ENCODE measurements at regions of chr20 and their contacts with region 1.

Region 1: GRCh38 chr20:31849455-31849925 is 4.1 kb upstream of the FOXS1 start:
- DNase-seq: no peak
- CTCF ChIP-seq: no peak

Region 2: DNA sequence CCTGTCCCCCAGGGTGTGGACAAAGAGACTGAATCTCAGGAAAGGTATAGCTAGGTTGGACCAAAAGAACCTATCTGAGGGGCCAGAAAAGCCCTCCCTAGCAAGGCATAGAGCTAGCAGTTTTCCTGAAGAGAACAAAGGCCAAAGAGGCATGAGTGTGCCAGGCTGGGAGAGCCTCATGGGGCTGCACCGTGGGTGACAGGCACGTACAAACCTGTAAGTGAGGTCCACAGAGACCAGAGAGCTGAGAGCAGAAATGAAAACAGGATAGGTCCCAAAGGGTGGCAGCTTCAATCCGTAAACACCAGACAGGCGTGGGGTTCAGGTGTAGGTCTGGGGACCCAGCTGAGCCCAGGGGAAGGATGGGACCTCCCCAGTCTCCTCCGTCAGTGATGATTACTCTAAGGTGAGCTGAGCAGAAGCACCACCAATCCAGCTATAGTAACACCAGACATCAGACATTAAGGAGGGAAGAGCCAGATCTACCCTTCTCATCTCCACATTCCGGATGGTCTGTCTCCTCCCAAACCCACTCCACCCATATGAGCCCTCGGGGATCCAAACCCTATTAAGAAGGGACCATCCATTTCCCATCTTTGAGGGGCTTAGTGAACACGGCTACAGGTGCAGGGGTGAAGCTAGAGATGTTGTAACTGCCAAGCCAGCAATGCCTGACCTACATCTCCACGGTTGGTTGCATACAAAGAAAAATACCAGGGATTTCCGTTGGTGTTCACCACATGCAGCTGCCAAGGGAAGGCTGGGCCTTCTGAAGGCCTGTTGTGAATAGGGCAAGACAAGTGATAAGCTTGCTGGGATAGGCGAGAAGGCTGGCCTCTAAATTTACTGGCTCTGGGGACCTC is 165.1 kb before region 1 on chr20:
- CTCF ChIA-PET with region 1: no interaction called
- POLR2A ChIA-PET with region 1: no interaction called
- DNase-seq: no peak
- CTCF ChIP-seq: no peak

Region 3: GRCh38 chr20:31822421-31823330 is 26.8 kb before region 1 on chr20:
- CTCF ChIA-PET with region 1: interaction called, 87 read pairs
- POLR2A ChIA-PET with region 1: no interaction called
- DNase-seq: peak; percentile 92
- CTCF ChIP-seq: peak; percentile 96

Region 4: GRCh38 chr20:31861346-31862156 is 12.1 kb after region 1 on chr20:
- CTCF ChIA-PET with region 1: interaction called, 54 read pairs
- POLR2A ChIA-PET with region 1: no interaction called
- DNase-seq: peak; percentile 92
- CTCF ChIP-seq: no peak

Region 5: DNA sequence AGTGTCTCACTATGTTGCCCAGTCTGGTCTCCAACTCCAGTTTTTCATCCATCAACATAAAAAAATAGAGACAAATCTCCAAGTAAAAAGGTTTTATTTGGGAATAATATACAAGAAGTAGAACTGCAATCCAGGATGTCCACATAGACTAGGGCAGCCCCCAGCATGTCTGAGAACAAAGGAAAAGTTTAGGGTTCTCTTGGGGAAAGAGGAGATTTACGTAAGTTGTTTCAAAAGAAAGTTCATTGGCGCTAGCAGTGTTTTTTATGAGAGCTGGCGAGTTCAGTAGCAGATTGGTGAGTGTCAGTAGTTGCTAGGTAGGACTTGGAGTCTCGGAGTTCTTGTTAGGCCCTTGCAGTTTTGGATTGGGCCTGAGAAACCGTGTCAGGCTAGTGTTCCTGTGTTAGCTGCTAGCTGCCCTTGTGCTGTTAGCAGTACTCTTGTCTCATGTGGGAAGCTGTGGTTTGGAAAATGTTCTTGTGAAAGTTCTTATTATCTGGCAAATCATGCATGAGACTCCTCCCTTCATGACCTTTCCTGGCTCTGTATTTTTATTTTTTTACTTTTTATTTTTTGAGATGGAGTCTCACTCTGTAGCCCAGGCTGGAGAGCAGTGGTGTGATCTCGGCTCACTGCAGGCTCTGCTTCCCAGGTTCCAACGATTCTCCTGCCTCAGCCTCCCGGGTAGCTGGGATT is 45.6 kb after region 1 on chr20:
- CTCF ChIA-PET with region 1: interaction called, 13 read pairs
- POLR2A ChIA-PET with region 1: no interaction called
- DNase-seq: peak; percentile 84
- CTCF ChIP-seq: no peak

Region 6: DNA sequence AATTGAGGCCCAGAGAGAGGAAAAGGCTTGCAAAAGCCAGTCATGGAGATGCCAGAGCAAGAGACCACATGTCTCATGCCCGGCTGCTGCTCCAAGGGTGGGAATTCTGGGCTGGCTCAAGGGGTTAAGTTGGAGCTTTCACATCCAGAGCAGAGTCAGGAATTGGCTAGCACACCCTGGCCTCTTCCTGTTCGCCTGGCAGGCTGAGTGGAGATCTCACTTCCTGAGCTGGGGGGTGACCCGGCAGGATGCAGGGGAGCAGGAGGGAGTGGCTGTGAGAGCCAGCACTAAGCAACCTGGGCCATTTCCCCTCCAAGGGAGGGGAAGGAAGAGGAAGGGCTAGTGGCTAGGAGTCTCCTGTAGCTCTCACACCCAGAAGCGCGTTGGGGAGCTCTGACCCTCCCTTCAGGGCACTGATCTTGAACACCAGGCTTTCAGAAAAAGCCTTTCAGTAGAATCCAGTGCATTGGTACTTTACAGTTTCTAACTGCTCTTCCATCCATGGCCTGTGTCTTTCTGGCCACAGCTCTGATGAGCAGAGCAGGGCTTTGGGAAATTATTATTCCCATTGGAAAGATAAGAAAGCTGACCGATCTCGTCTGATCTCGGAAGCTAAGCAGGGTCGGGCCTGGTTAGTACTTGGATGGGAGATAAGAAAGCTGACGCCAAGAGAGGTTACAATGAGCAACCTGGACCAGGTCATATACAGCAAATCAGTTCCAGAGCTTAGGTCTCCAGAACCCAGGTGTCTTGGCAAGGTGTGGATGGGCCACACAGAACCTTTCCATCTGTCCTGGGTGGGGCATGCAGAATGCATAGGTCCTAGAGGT is 158.5 kb after region 1 on chr20:
- CTCF ChIA-PET with region 1: interaction called, 14 read pairs
- POLR2A ChIA-PET with region 1: no interaction called
- DNase-seq: no peak
- CTCF ChIP-seq: no peak

Region 7: GRCh38 chr20:32357869-32358631 is 508.6 kb after region 1 on chr20 and contains the start of gene ASXL1:
- CTCF ChIA-PET with region 1: no interaction called
- POLR2A ChIA-PET with region 1: no interaction called
- DNase-seq: peak; percentile 91
- CTCF ChIP-seq: no peak

Measured in GM10248 (cell line).